ENCODE measurements at regions of chr4 and their contacts with region 1.

Region 1: DNA sequence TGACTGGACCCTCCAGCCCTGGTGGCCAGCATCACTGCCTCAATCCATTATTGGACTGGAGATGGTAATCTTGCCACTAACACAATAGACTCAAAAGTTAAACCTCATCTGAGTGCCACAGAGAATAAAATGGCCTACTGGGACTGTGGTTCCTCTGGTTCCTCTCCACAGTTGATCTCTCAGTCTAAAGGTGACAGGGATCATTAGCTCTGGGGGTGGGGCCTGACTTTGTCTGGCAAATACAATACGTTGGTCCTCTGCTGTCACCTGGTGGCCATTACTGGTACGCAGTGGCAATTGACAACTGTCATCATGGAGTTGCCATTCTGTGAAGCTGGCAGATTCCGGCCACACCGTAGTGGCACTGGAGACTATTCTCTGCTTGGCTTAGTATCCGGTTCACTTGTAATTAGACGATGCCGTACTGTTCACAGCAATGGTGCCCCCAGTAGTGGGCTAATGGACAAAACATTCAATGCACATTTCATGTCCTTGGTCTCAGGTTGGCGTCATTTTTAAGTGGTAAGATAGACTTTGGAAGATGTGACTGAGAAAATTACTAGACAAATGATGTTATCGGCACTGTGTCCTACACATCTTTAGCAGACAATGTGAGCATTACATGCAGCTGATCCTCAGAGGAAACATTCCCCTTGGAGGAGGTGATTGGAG is 6.7 kb downstream of the FGFBP2 start:
- DNase-seq: peak; percentile 68
- H3K4me3 Mint-ChIP-seq: no peak overlapping the region
- H3K27ac Mint-ChIP-seq: no peak overlapping the region
- H3K4me1 Mint-ChIP-seq: peaks cover 6% of the 10 kb centered on the region
- H3K27me3 Mint-ChIP-seq: peaks cover 14% of the 10 kb centered on the region

Region 2: DNA sequence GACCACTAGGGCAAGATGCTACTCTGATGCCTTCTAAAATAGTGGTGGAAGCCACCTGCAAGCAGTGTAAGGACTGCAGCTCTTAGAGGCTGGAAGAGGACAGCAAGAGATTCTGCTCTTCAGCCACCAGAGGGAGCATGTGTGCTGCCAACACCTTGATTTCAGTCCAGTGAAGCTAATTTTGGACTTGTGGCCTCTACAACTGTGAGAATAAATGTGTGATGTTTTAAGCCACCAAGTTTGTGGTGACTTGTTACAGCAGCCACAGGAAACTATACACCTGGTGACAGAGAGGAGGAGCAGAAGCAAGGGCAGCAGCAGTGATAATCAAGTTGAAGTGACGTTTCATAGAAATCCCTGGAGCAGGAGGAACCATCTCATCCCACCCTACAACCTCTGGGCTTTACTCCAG is 73.6 kb before region 1 on chr4:
- intact Hi-C with region 1: loop called (anchors 1 kb)
- DNase-seq: peak; percentile 30
- H3K4me3 Mint-ChIP-seq: no peak overlapping the region
- H3K27ac Mint-ChIP-seq: no peak overlapping the region
- H3K4me1 Mint-ChIP-seq: peaks cover 1% of the 10 kb centered on the region
- H3K27me3 Mint-ChIP-seq: peaks cover 26% of the 10 kb centered on the region

Measured in activated T-helper 2 cell treated with anti-CD3 and anti-CD28 coated beads, Interferon-gamma antibody, Interleukin-2, Interleukin-4, amounts not matched to agents 10 μg/mL and 5 μg/mL and 100 μg/mL, durations not matched to agents 14 hours and 24 hours and 36 hours (primary cell).